Left cardiac atrium (tissue), 4 donors: ENCODE measurements at regions of chr13 and their contacts with region 1.

Region 1: DNA sequence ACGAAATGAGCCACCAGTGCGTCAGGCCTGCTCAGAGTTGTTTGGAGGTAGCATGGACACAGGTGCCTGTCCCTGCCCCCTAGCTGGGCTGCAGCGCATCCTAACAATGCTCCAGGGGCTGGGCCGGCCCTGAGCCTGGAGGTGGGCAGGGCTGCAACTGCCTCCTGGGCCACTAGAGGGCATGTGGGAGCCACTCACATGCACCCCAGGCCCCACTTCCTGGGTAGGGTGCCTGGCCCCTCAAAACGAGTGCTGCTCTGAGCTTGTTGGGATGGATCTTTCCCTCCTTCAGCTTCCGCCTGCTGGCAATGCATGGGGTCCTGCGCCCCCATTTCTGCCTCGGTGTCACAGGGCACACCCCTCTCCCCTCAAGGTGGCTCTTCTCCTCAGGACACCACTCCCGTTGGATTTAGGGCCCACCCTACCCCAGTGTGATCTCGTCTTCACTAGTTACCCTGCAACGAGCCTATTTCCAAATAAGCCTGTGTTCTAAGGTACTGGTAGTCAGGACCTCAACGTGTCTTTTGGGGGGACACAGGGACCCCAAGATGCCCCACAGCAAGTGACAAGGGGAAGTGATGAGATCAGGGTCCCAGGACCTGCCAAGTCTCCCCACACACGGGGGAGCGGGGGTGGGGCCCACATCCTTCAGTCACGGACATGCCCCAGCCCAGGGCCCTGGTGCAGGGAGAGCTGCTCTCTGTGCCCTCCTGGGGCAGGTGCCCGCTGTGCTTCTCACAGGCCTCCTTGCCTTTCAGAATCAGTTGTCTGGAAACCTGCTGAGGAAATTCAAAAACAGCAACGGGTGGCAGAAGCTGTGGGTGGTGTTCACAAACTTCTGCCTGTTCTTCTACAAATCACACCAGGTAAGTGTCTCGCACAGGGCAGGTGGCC is 131.3 kb downstream of the STK24 start:
- DNase-seq: peak; percentile 72
- ATAC-seq: peak; percentile 84 to 87

Region 2: DNA sequence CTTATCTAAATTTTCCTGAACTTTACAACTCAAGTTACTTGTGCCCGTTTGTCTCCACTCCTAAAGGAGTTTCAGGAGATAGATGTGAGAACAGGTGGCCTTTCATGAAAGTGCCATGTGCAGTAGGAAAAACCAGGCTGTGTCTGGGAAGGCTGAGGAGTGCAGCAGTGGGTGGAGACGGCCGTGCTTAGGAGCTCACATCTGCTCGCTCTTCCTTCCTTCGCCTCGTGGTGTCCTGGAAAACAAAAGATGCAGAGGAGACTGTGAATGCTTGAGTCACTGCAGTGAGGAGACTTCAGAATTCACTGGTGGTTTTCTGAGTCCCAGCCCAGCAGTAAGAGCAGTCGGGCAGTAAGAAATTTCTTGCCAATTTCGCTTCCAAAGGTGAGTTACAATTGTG is 130.1 kb before region 1 on chr13:
- intact Hi-C with region 1: no loop called
- DNase-seq: no peak
- ATAC-seq: peak in 1 of 2 donors; percentile 55

Region 3: DNA sequence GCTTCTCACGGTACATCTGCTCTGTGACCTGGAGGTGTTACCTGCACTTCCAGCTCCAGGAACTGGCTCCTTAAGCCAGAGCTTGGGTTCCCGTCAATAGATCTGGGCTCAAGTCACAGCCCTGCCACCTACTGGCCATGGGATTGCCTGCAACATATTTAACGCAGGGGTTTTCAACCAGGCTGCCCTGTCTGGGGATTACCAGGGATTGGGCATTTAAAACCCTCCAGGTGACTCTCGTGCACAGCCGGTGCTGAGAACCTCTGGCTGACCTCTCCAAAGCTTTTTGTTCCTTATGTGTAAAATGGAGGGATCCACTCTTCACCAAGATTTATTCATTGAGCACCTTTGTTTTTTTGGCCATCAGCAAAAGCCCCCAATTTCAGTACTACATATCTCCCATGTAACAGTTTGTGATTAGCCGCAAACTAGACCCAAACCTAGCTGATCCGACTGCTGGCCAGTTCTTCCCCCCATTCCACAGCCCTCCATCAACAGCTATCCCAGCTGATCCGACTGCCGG is 207.9 kb after region 1 on chr13:
- intact Hi-C with region 1: loop called (anchors 2 to 5 kb)
- DNase-seq: peak; percentile 83
- ATAC-seq: peak; percentile 85 to 87

Region 4: DNA sequence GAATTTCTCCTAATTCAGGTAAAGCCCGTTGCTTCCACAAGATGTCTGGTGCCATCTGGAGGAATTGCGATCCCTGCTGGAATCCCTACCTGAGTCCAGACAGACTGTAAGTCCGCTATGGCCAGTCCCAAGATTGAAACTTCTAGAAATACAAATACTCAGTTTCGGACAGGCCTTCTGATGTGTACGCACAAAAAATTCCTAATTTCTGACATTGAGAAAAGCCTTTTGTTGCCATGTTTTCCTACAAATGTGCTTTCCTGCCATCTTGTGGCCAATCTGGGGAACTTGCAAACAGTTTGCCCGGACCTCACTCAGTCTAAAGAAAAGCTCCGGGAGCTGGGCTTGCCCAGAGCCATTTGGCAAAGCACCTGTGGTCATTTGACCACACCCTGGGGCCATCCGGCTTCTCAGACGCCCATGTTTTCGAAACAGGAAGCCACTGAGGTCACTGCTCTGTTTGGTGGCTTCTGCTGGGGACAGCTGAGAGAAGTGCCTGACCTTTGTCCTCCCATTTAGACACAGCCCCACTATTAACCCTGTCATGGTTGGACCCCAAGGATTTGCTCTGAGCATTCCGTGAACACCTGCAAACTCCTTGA is 227.5 kb after region 1 on chr13:
- intact Hi-C with region 1: loop called in 1 of 2 experiments (anchors 1 kb)
- DNase-seq: peak; percentile 73
- ATAC-seq: peak; percentile 88 to 91